OCI-LY7 (cell line): ENCODE measurements at regions of chr18 and their contacts with region 1.

Region 1: DNA sequence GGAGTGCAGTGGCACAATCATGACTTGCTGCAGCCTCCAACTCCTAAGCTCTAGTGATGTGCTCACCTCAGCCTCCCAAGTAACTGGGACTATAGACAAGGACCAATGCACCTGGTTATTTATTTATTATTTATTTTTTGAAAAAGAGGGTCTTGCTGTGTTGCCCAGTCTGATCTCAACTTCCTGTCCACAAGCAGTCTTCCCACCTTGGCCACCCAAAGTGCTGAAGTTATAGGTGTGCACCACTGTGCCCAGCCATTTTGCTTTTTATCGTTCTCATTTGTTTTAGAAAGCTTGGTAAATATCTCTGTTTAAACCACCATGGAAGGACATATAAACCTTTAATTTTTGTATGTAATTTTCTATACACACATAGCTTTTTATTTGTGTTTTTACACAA is 74.2 kb downstream of the SMCHD1 start:
- DNase-seq: no peak
- H3K4me3 ChIP-seq: no peak overlapping the region
- H3K27ac ChIP-seq: no peak overlapping the region
- H3K4me1 ChIP-seq: no peaks in the 10 kb centered on the region
- CTCF ChIP-seq: no peak

Region 2: GRCh38 chr18:2513616-2514015 is 216.1 kb before region 1 on chr18:
- CTCF ChIA-PET with region 1: no interaction called
- POLR2A ChIA-PET with region 1: interaction called, 11 read pairs
- intact Hi-C with region 1: no loop called
- DNase-seq: no peak
- H3K4me3 ChIP-seq: no peak overlapping the region
- H3K27ac ChIP-seq: no peak overlapping the region
- H3K4me1 ChIP-seq: peaks cover 19% of the 10 kb centered on the region
- CTCF ChIP-seq: no peak

Region 3: GRCh38 chr18:2606335-2606734 is 123.4 kb before region 1 on chr18:
- CTCF ChIA-PET with region 1: no interaction called
- POLR2A ChIA-PET with region 1: interaction called, 3 read pairs
- intact Hi-C with region 1: loop called (anchors 10 kb)
- DNase-seq: no peak
- H3K4me3 ChIP-seq: no peak overlapping the region
- H3K27ac ChIP-seq: no peak overlapping the region
- H3K4me1 ChIP-seq: peaks cover 14% of the 10 kb centered on the region
- CTCF ChIP-seq: no peak

Region 4: GRCh38 chr18:2680216-2680792 is 49.5 kb before region 1 on chr18:
- CTCF ChIA-PET with region 1: no interaction called
- POLR2A ChIA-PET with region 1: interaction called, 3 read pairs
- intact Hi-C with region 1: loop called (anchors 5 kb)
- DNase-seq: no peak
- H3K4me3 ChIP-seq: no peak overlapping the region
- H3K27ac ChIP-seq: no peak overlapping the region
- H3K4me1 ChIP-seq: no peaks in the 10 kb centered on the region
- CTCF ChIP-seq: no peak

Region 5: GRCh38 chr18:2741651-2742050 is 11.9 kb after region 1 on chr18:
- CTCF ChIA-PET with region 1: no interaction called
- POLR2A ChIA-PET with region 1: interaction called, 11 read pairs
- intact Hi-C with region 1: no loop called
- DNase-seq: no peak
- H3K4me3 ChIP-seq: no peak overlapping the region
- H3K27ac ChIP-seq: no peak overlapping the region
- H3K4me1 ChIP-seq: no peaks in the 10 kb centered on the region
- CTCF ChIP-seq: no peak

Region 6: DNA sequence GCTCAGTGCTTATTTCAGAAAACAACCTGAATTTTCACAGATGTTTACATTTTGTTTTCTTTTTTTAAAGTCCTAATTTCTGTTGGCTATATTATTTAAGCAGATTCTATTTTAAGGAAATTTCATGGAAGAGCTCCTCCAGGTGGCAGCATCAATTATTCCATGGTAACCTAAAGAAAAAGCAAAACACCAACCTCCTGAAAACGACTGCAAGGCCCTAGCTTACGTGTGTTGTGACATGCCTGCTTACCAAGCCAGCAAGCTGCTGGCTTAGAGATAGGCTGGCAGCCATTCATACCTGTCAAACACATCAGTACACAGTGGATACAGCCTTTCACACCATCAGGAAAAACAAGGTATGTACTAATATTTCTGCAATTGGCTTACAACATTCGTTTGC is 218.3 kb after region 1 on chr18:
- CTCF ChIA-PET with region 1: no interaction called
- POLR2A ChIA-PET with region 1: no interaction called
- intact Hi-C with region 1: no loop called
- DNase-seq: no peak
- H3K4me3 ChIP-seq: no peak overlapping the region
- H3K27ac ChIP-seq: no peak overlapping the region
- H3K4me1 ChIP-seq: peaks cover 4% of the 10 kb centered on the region
- CTCF ChIP-seq: peak; percentile 47; the same call in 1 of the 2 replicates